PC-3 (cell line): ENCODE measurements at regions of chr11 and their contacts with region 1.

Region 1: DNA sequence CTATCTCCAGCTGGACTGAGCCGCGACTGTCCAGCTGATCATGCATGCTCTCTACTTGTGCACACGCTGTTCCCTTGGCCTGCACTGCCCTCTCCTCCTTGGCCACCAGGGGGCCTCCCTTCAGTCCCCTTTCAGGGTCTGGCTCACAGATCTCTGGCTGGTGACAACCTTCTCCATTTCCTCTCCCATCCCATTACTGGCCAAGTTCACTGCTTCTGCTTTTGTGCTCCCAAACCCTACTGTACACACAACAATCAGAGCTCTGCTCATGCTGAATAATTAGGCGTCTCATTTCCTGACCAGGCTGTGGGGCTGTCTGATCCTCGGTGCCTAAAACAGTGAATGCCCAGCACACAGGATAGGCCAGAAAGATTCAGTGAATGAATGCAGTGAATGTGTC is 224.0 kb upstream of the NARS2 start:
- DNase-seq: peak; percentile 85
- ATAC-seq: peak; percentile 1; the same call in 1 of the 2 replicates
- H3K4me3 ChIP-seq: no peak overlapping the region
- H3K27ac ChIP-seq: peak overlapping the region; percentile 96
- H3K4me1 ChIP-seq: peaks cover 83% of the 10 kb centered on the region
- H3K27me3 ChIP-seq: no peaks in the 10 kb centered on the region
- CTCF ChIP-seq: peak; percentile 96

Region 2: GRCh38 chr11:78676026-78676557 is 122.6 kb before region 1 on chr11:
- CTCF ChIA-PET with region 1: no interaction called
- POLR2A ChIA-PET with region 1: interaction called, 12 read pairs
- intact Hi-C with region 1: no loop called
- DNase-seq: no peak
- ATAC-seq: no peak
- H3K4me3 ChIP-seq: no peak overlapping the region
- H3K27ac ChIP-seq: no peak overlapping the region
- H3K4me1 ChIP-seq: no peaks in the 10 kb centered on the region
- H3K27me3 ChIP-seq: no peaks in the 10 kb centered on the region
- CTCF ChIP-seq: no peak

Region 3: GRCh38 chr11:78742430-78742829 is 56.2 kb before region 1 on chr11:
- CTCF ChIA-PET with region 1: no interaction called
- POLR2A ChIA-PET with region 1: no interaction called
- intact Hi-C with region 1: loop called (anchors 2 kb)
- DNase-seq: peak; percentile 88
- ATAC-seq: peak; percentile 80
- H3K4me3 ChIP-seq: no peak overlapping the region
- H3K27ac ChIP-seq: peak overlapping the region; percentile 63
- H3K4me1 ChIP-seq: peaks cover 18% of the 10 kb centered on the region
- H3K27me3 ChIP-seq: no peaks in the 10 kb centered on the region
- CTCF ChIP-seq: peak; percentile 47

Region 4: GRCh38 chr11:78907636-78908035 is 109.0 kb after region 1 on chr11:
- CTCF ChIA-PET with region 1: interaction called, 7 read pairs
- POLR2A ChIA-PET with region 1: interaction called, 4 read pairs
- intact Hi-C with region 1: loop called (anchors 1 kb)
- DNase-seq: peak; percentile 98
- ATAC-seq: peak; percentile 85
- H3K4me3 ChIP-seq: peak overlapping the region; percentile 47
- H3K27ac ChIP-seq: peak overlapping the region; percentile 97
- H3K4me1 ChIP-seq: peaks cover 35% of the 10 kb centered on the region
- H3K27me3 ChIP-seq: no peaks in the 10 kb centered on the region
- CTCF ChIP-seq: no peak

Region 5: GRCh38 chr11:78940500-78941225 is 142.0 kb after region 1 on chr11:
- CTCF ChIA-PET with region 1: no interaction called
- POLR2A ChIA-PET with region 1: no interaction called
- intact Hi-C with region 1: no loop called
- DNase-seq: no peak
- ATAC-seq: no peak
- H3K4me3 ChIP-seq: no peak overlapping the region
- H3K27ac ChIP-seq: no peak overlapping the region
- H3K4me1 ChIP-seq: no peaks in the 10 kb centered on the region
- H3K27me3 ChIP-seq: no peaks in the 10 kb centered on the region
- CTCF ChIP-seq: no peak

Region 6: DNA sequence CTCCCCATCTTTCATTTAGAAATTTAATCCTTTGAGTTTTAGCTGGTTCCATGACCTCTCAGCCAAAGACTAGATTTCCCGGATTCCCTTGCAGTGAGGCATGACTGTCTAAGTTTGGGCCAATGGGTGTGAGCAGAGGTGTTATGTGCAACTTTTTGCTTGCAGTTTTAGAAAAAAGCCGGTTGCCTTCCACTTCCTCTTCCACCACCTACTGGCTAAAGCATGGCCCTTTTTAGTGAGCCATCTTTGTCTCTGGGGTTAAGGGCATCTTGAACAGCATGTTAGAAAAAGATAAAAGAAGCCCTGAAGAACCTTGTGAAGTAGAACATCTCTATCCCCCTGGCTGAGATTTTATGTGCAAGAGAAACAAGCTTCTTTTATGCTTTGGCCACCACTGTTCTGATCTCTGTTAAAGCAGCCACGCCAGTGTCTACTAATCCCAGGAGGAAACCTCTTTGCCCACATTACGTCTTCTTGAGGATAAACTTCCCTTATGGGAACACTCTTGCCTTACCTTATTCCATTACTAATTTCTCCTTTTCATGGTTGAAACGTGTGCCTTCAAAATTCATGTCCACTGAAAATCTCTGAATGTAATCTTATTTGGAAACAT is 362.2 kb after region 1 on chr11:
- CTCF ChIA-PET with region 1: no interaction called
- POLR2A ChIA-PET with region 1: no interaction called
- intact Hi-C with region 1: loop called (anchors 10 kb)
- DNase-seq: peak; percentile 81
- ATAC-seq: peak; percentile 77
- H3K4me3 ChIP-seq: no peak overlapping the region
- H3K27ac ChIP-seq: no peak overlapping the region
- H3K4me1 ChIP-seq: peaks cover 6% of the 10 kb centered on the region
- H3K27me3 ChIP-seq: peaks cover 3% of the 10 kb centered on the region; the same call in 1 of the 2 replicates
- CTCF ChIP-seq: peak; percentile 85